Activated CD4-positive, alpha-beta memory T cell treated with anti-CD3 and anti-CD28 coated beads for 36 hours (primary cell): ENCODE measurements at regions of chr17 and their contacts with region 1.

Region 1: GRCh38 chr17:38729886-38730525 is at the start of gene CISD3:
- DNase-seq: peak; percentile 89
- H3K4me3 Mint-ChIP-seq: peak within 1 kb of the TSS; percentile 92
- H3K27ac Mint-ChIP-seq: peak within 1 kb of the TSS; percentile 98
- H3K4me1 Mint-ChIP-seq: peaks cover 78% of the 10 kb centered on the region
- H3K27me3 Mint-ChIP-seq: no peaks in the 10 kb centered on the region
- total RNA-seq, gene CISD3: 54.7 to 59.1 TPM

Region 2: DNA sequence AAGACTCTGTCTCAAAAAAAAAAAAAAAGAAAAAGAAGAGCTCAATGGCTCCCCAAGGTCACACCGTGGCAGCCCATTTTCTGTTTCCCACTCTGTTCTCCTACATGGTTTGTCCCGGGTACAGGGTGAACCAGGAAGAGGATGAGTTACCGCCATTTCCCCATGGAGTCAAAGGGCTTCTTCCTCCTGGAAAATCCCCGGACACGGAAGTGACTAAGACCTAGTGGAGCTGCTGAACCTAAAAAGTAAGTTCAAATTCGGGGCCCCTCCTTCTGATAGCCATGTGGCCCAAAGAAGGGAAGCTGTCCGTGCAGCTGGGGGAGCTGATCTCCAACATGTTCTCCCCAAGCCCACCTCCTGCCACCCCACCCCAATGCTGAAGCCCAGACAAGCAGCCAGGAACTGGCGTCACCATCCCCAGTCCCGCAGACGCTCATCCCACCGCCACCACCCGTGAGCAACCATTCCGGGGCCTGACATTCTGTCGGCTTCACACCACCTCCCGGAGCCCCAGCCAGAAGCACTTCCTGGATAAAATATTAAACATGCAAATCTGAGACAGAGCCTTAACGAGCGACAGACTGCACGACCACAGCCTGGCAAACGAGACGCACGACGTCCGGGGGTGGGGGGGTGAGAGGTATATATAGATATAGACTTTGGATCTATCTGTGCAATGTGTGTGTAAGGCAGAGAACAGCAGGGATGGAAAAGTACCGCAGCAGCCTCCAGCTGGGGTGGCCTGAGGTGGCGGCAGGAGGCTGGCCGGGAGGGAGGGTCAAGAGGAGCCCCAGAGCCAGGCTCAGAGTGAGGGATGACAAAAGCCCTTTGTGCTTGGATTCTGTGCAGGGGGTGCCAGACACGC is 72.8 kb before region 1 on chr17:
- CTCF ChIA-PET with region 1: no interaction called
- POLR2A ChIA-PET with region 1: no interaction called
- intact Hi-C with region 1: no loop called
- DNase-seq: no peak
- H3K4me3 Mint-ChIP-seq: no peak overlapping the region
- H3K27ac Mint-ChIP-seq: no peak overlapping the region
- H3K4me1 Mint-ChIP-seq: peaks cover 11% of the 10 kb centered on the region
- H3K27me3 Mint-ChIP-seq: peaks cover 11% of the 10 kb centered on the region

Region 3: DNA sequence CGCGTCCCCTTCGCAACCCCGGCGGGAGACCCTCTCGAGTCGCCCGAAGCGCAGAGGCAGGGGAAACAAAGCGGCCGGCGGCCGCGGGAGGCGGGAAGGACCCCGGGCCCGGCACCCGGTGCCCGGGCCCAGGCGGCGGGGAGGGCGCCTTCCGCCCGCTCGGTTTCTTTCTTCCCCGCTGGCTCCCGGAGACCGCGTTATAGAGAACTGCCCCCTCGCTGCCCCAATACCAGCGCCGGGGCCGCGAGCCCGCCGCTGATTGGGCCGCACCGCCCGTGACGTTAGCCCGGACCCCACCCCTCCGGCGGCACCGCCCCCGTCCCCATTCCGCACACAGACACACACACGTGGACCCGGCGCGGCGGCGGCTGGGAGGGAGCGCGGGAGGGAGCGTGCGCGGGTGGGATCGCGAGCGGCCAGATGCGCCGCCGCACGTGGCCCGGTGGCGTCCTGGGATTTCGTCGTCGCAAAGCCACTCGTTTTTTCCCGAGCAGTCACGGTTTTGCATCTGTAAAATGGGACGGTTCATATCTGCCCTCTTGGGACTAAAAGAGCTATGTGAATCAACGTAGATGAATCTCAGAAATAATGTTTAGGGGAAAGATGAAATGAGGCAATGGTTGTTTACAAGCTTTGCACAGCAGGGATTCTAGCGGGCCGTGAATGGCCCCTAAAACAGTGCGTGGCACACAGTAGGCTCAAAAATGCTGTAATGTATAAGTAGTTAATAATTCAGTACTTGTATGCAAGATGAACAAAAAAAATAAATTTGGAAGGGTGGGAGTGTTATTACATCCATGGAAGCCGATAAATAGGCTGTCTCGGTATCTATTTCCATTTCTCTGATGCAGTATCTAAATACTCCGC is 55.0 kb before region 1 on chr17 and contains the start of gene EPOP:
- CTCF ChIA-PET with region 1: interaction called, 210 read pairs
- POLR2A ChIA-PET with region 1: interaction called, 16 read pairs
- intact Hi-C with region 1: loop called (anchors 1 kb)
- DNase-seq: peak; percentile 94
- H3K4me3 Mint-ChIP-seq: peak within 1 kb of the TSS; percentile 62
- H3K27ac Mint-ChIP-seq: peak within 1 kb of the TSS; percentile 93
- H3K4me1 Mint-ChIP-seq: peaks cover 46% of the 10 kb centered on the region
- H3K27me3 Mint-ChIP-seq: peaks cover 10% of the 10 kb centered on the region
- total RNA-seq, gene EPOP: 37.1 to 38.0 TPM

Region 4: GRCh38 chr17:38717139-38717745 is 12.8 kb before region 1 on chr17:
- CTCF ChIA-PET with region 1: interaction called, 11 read pairs
- POLR2A ChIA-PET with region 1: interaction called, 10 read pairs
- intact Hi-C with region 1: no loop called
- DNase-seq: no peak
- H3K4me3 Mint-ChIP-seq: no peak overlapping the region
- H3K27ac Mint-ChIP-seq: peak overlapping the region; percentile 1
- H3K4me1 Mint-ChIP-seq: peaks cover 48% of the 10 kb centered on the region
- H3K27me3 Mint-ChIP-seq: no peaks in the 10 kb centered on the region

Region 5: GRCh38 chr17:38789185-38789584 is 59.2 kb after region 1 on chr17:
- CTCF ChIA-PET with region 1: no interaction called
- POLR2A ChIA-PET with region 1: no interaction called
- intact Hi-C with region 1: no loop called
- DNase-seq: no peak
- H3K4me3 Mint-ChIP-seq: no peak overlapping the region
- H3K27ac Mint-ChIP-seq: no peak overlapping the region
- H3K4me1 Mint-ChIP-seq: peaks cover 6% of the 10 kb centered on the region
- H3K27me3 Mint-ChIP-seq: no peaks in the 10 kb centered on the region